Head of caudate nucleus (tissue), 42 donors: ENCODE measurements at regions of chr5 and their contacts with region 1.

Region 1: GRCh38 chr5:168679515-168679920 is 100.3 kb upstream of the PANK3 start:
- DNase-seq: peak; percentile 22 to 93 (median 82)

Region 2: GRCh38 chr5:168706655-168707069 is 27.1 kb after region 1 on chr5:
- intact Hi-C with region 1: no loop called
- DNase-seq: peak in 41 of 42 donors; percentile 35 to 87 (median 65)

Region 3: DNA sequence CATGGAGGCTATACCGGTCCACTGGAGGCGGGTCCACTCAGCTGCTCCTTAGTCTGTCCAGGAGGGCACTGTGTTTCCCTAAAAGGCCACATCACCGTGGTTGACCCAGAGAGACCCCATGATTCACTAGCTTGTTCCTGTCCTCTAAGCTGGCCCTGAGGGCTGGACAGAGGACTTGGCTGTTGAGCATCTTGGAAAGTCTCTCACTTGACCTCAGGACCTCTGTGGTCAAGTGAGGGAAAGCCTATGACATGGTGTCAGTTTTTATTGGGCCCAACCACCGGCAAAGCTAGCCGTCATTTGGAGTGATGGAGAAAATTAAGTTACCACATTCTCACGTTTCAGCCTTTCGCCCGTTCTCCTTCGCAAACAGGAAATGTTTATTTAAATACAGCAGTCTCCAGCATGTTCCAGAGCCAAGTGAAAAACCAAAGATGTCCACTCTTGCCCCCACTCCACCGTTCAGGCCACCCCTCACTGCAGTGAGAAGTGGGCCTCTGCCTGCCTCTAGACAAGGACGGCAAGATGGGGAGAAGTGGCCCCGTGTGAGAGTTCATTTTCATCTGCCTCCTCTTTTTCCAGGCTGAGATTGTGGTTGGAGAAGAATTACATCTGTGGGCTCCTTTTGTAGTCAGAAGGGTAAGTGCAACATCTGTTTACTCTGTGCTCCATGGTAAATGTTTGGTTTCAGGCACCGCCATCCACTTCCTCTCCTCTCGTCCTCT is 617.1 kb after region 1 on chr5:
- intact Hi-C with region 1: loop called (anchors 10 kb)
- DNase-seq: no peak